ENCODE measurements at regions of chr6 and their contacts with region 1.

Region 1: GRCh38 chr6:30626484-30627366 is at the start of gene ATAT1:
- DNase-seq: peak; percentile 89 to 92 (median 91)
- H3K4me3 ChIP-seq: peak within 1 kb of the TSS; percentile 62 to 95 (median 78)
- H3K27ac ChIP-seq: peak within 1 kb of the TSS; percentile 86 to 87
- H3K4me1 ChIP-seq: peaks cover 4 to 15% (median 14%) of the 10 kb centered on the region in 4 experiments
- H3K27me3 ChIP-seq: no peaks in the 10 kb centered on the region

Region 2: GRCh38 chr6:30061092-30061857 is 565.5 kb before region 1 on chr6 and contains the start of gene POLR1H:
- CTCF ChIA-PET with region 1: no interaction called
- POLR2A ChIA-PET with region 1: no interaction called
- DNase-seq: peak; percentile 94 to 95 (median 95)
- H3K4me3 ChIP-seq: peak within 1 kb of the TSS; percentile 74 to 100 (median 95)
- H3K27ac ChIP-seq: peak within 1 kb of the TSS; percentile 86 to 97
- H3K4me1 ChIP-seq: peaks cover 18 to 36% (median 28%) of the 10 kb centered on the region in 4 experiments
- H3K27me3 ChIP-seq: no peaks in the 10 kb centered on the region

Region 3: GRCh38 chr6:30326526-30327260 is 300.0 kb before region 1 on chr6 and contains the start of gene TRIM39:
- CTCF ChIA-PET with region 1: no interaction called
- POLR2A ChIA-PET with region 1: no interaction called
- DNase-seq: peak; percentile 86 to 93 (median 89)
- H3K4me3 ChIP-seq: peak within 1 kb of the TSS; percentile 78 to 96 (median 90)
- H3K27ac ChIP-seq: peak within 1 kb of the TSS; percentile 87 to 96
- H3K4me1 ChIP-seq: peaks cover 12 to 34% (median 28%) of the 10 kb centered on the region in 4 experiments
- H3K27me3 ChIP-seq: no peaks in the 10 kb centered on the region

Region 4: DNA sequence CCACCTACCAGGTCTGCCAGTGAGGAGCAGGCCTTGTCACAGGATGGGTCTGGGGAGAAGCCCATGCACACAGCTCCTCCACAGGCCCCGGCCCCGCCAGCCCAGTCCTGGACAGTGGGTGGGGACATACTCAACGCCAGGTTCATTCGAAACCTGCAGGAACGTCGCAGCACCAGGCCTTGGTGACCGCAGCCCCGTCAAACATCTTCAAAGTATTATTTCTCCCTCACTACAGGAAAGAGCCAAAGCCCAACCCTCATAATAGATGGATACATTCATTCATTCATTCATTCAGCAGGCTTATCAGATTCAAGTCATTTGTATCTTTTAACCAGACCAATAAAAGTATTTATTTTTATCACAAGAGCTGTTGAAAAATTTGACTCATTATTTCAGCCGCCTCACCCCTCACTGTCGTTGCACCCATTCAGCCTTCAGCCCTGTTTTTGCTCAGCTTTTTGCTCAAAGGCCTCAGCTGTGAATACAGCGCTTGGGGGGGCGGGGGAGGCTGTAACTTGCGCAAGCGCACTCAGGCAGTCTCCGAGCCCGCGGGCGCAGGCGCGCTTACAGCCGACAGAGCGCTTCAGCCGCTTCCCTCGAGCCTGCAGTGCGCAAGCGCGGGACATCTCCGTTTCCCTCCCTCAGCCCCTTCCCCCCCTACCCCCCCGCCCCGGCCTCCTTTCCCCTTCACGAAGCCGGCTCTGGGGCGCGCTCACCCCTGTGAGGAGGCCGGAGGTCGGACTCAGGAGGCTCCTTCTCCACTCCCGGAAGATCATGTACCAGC is 19.9 kb after region 1 on chr6 and contains the start of gene C6orf136:
- CTCF ChIA-PET with region 1: interaction called, 97 read pairs
- POLR2A ChIA-PET with region 1: no interaction called
- DNase-seq: peak; percentile 93 to 97 (median 95)
- H3K4me3 ChIP-seq: peak within 1 kb of the TSS; percentile 54 to 97 (median 91)
- H3K27ac ChIP-seq: peak within 1 kb of the TSS in 1 of 2 experiments; percentile 85
- H3K4me1 ChIP-seq: peaks cover 11 to 49% (median 38%) of the 10 kb centered on the region in 4 experiments
- H3K27me3 ChIP-seq: no peaks in the 10 kb centered on the region

Region 5: DNA sequence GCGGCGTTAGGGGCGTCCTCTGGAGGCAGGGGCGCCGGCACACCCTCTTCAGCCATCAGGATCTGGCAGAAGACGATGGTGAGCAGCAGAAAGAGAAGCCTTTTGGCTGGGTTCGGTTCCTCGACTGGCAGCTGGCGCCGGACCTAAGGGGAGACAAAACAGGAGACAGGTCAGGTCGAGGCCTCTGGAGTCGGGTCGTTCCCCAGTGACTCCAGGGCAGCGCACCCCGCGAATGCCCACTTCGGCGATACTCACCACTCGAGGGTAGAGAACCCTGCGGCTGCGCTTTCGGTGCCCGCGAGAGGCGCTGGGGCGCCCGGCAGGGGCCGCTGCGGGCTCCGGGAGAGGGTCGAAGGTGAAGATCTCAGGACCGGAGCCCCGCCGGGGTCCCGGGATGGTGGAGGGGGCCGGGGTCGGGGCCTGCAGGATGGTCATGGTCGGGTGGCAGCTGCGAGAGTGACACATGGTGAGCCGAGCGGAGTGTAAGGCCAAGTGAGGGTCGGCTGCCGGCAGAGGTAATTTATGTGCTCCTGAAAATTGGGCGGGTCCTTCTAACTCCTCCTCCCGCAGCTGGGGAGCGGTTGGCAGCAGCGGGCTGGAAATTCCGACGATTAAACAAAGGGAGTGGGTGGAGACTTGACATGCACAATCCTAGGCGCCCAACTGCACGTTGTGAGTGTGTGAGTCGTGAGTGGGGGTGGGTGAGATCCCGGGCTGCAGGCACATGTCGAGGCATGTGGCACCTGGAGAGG is 117.5 kb after region 1 on chr6 and contains the start of gene IER3:
- CTCF ChIA-PET with region 1: no interaction called
- POLR2A ChIA-PET with region 1: no interaction called
- DNase-seq: peak; percentile 56 to 79 (median 78)
- H3K4me3 ChIP-seq: peak within 1 kb of the TSS; percentile 16 to 95 (median 82)
- H3K27ac ChIP-seq: peak within 1 kb of the TSS in 1 of 2 experiments; percentile 78
- H3K4me1 ChIP-seq: peaks cover 0 to 37% (median 35%) of the 10 kb centered on the region in 4 experiments
- H3K27me3 ChIP-seq: peaks cover 0 to 14% (median 1%) of the 10 kb centered on the region in 5 experiments

Measured in common myeloid progenitor, CD34-positive (primary cell).